ENCODE measurements at regions of chr1 and their contacts with region 1.

Region 1: DNA sequence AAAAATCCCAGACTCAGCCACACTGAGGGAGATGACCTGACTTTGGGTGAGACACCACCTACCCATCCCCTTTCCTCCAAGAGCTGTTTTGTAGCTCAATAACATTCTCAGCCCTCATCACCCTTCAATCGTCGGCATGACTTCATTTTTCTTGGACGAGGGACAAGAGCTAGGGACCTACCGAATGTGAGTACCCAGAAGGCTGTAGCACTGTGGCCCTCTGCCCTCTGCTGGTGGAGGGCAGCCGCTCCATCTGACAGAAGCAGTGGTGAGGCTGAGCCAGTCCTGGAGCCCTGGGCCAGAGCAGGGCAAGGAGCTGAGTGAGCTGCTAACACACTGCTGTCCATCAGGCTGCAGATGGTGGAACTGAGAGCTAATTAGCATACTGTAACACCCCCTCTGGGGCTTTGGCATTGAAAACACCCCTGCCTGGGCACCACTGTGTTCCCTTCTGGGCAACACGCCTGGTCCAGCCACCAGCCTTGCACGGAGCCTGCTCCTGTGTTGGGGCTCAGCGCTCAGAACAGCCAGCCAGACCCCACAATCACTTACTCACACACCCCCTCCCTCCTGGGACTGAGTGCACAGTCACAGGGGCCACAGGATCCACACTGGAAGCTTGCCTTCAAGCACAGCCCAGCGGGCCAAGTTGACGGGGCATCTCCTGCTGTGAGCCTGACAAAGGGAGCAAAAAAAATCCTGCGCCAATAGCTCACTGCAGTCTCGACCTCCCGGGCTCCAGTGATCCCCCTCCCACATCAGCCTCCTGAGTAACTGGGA is 18.3 kb upstream of the ALPL start:
- DNase-seq: no peak
- H3K4me3 ChIP-seq: no peak overlapping the region
- CTCF ChIP-seq: peak; percentile 81

Region 2: GRCh38 chr1:21573971-21574465 is 83.1 kb after region 1 on chr1:
- CTCF ChIA-PET with region 1: interaction called, 10 read pairs
- POLR2A ChIA-PET with region 1: no interaction called
- DNase-seq: no peak
- H3K4me3 ChIP-seq: no peak overlapping the region
- CTCF ChIP-seq: peak; percentile 60

Measured in AG04449 (cell line).